ENCODE measurements at regions of chr4 and their contacts with region 1.

Region 1: GRCh38 chr4:74133786-74134499 is 24.0 kb upstream of the MTHFD2L start:
- DNase-seq: peak; percentile 84
- H3K4me3 ChIP-seq: no peak overlapping the region
- H3K27ac ChIP-seq: no peak overlapping the region
- H3K4me1 ChIP-seq: no peaks in the 10 kb centered on the region
- H3K27me3 ChIP-seq: no peaks in the 10 kb centered on the region
- CTCF ChIP-seq: peak; percentile 47 to 72 (median 64)
- EP300 ChIP-seq: no peak
- POLR2A ChIP-seq: no peak

Region 2: GRCh38 chr4:73311428-73311827 is 822.5 kb before region 1 on chr4:
- intact Hi-C with region 1: loop called (anchors 10 kb)
- DNase-seq: no peak
- H3K4me3 ChIP-seq: no peak overlapping the region
- H3K27ac ChIP-seq: no peak overlapping the region
- H3K4me1 ChIP-seq: no peaks in the 10 kb centered on the region
- H3K27me3 ChIP-seq: no peaks in the 10 kb centered on the region
- CTCF ChIP-seq: peak in 1 of 4 experiments; percentile 29
- EP300 ChIP-seq: no peak
- POLR2A ChIP-seq: no peak

Region 3: DNA sequence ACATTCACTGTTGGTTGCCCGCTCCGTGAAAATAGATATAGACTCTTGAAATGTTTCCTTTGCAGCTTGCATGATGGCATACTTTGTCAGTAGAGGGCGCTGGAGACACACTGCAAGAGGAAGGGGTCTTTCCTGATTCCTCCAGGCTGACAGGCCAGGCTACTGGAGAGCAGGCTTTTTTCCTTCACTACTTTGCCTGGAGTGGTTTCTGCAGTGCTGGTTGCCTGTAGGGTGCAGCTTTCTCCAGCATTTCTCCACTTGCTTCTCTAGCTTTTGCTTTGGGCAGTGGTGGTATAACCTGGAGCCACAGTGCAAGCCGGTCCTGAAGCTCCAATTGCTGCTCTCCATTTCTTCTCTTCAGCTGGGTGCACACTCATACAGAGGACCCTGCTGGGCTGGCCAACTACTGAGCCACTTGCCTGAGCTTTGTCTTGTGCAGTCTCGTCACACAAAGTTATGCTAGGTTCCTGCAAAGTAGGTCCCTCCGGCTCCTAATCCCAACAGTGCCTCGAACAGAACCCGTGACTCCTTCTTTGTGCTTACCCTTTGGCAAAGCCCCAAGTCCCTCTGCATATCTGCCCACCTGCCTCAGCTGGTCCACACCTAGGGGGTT is 560.0 kb before region 1 on chr4:
- intact Hi-C with region 1: loop called (anchors 5 kb)
- DNase-seq: peak; percentile 79
- H3K4me3 ChIP-seq: no peak overlapping the region
- H3K27ac ChIP-seq: no peak overlapping the region
- H3K4me1 ChIP-seq: no peaks in the 10 kb centered on the region
- H3K27me3 ChIP-seq: no peaks in the 10 kb centered on the region
- CTCF ChIP-seq: peak; percentile 51 to 73 (median 66)
- EP300 ChIP-seq: no peak
- POLR2A ChIP-seq: no peak

Region 4: GRCh38 chr4:73662709-73663546 is 471.0 kb before region 1 on chr4:
- intact Hi-C with region 1: loop called (anchors 2 kb)
- DNase-seq: no peak
- H3K4me3 ChIP-seq: no peak overlapping the region
- H3K27ac ChIP-seq: no peak overlapping the region
- H3K4me1 ChIP-seq: no peaks in the 10 kb centered on the region
- H3K27me3 ChIP-seq: no peaks in the 10 kb centered on the region
- CTCF ChIP-seq: peak in 3 of 4 experiments; percentile 43 to 55 (median 48)
- EP300 ChIP-seq: no peak
- POLR2A ChIP-seq: no peak

Region 5: GRCh38 chr4:73729534-73730165 is 404.3 kb before region 1 on chr4:
- intact Hi-C with region 1: loop called (anchors 2 kb)
- DNase-seq: peak; percentile 85
- H3K4me3 ChIP-seq: no peak overlapping the region
- H3K27ac ChIP-seq: no peak overlapping the region
- H3K4me1 ChIP-seq: peaks cover 0 to 35% (median 28%) of the 10 kb centered on the region in 4 donors
- H3K27me3 ChIP-seq: no peaks in the 10 kb centered on the region
- CTCF ChIP-seq: peak; percentile 52 to 79 (median 74)
- EP300 ChIP-seq: no peak
- POLR2A ChIP-seq: no peak

Region 6: GRCh38 chr4:74098450-74098994 is 35.4 kb before region 1 on chr4:
- intact Hi-C with region 1: loop called (anchors 5 kb)
- DNase-seq: peak; percentile 68
- H3K4me3 ChIP-seq: peak overlapping the region; percentile 25 to 66 (median 62)
- H3K27ac ChIP-seq: peak overlapping the region; percentile 72 to 79 (median 78)
- H3K4me1 ChIP-seq: peaks cover 0 to 6% (median 5%) of the 10 kb centered on the region in 4 donors
- H3K27me3 ChIP-seq: no peaks in the 10 kb centered on the region
- CTCF ChIP-seq: no peak
- EP300 ChIP-seq: no peak
- POLR2A ChIP-seq: no peak